ENCODE measurements at regions of chr2 and their contacts with region 1.

Region 1: GRCh38 chr2:60581433-60582282 is 28.2 kb upstream of the BCL11A start:
- DNase-seq: peak; percentile 77
- H3K4me3 ChIP-seq: peak overlapping the region; percentile 51
- H3K27ac ChIP-seq: no peak overlapping the region
- H3K4me1 ChIP-seq: no peaks in the 10 kb centered on the region
- CTCF ChIP-seq: peak; percentile 94

Region 2: DNA sequence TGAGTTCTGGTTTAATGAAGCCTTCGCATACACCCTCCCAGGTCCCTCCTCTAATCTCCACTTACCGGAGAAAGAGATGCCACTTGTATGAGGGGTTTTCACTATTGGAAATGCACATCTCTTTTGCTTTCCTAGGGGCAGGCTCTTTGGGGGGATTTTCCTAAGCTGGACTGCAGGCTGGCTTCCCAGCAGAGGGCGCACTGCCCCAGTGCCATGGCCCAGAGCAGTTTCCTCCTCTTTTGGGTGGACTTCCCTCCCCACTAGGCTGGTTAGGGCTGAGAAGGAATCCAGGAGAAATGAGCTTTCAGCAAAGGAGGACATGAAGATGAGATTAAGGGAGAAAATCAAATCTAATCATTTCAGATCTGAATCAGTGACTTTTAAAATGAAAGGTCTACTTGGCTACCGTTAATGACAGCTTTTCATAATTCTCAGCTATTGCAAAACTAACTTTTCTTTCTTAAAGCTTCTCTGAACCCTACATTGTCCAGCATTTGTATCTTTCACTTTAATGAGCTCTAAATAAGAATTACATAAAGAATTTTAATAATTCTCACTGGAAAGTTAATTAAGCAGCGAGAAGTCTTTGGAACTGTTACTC is 1556.4 kb before region 1 on chr2:
- CTCF ChIA-PET with region 1: no interaction called
- POLR2A ChIA-PET with region 1: no interaction called
- intact Hi-C with region 1: loop called (anchors 5 kb)
- DNase-seq: peak; percentile 47
- H3K4me3 ChIP-seq: no peak overlapping the region
- H3K27ac ChIP-seq: no peak overlapping the region
- H3K4me1 ChIP-seq: no peaks in the 10 kb centered on the region
- CTCF ChIP-seq: peak; percentile 92

Region 3: GRCh38 chr2:59301466-59302402 is 1279.9 kb before region 1 on chr2:
- CTCF ChIA-PET with region 1: no interaction called
- POLR2A ChIA-PET with region 1: no interaction called
- intact Hi-C with region 1: loop called (anchors 5 kb)
- DNase-seq: peak; percentile 60
- H3K4me3 ChIP-seq: no peak overlapping the region
- H3K27ac ChIP-seq: no peak overlapping the region
- H3K4me1 ChIP-seq: no peaks in the 10 kb centered on the region
- CTCF ChIP-seq: peak; percentile 75

Region 4: GRCh38 chr2:60780721-60781120 is 199.1 kb after region 1 on chr2:
- CTCF ChIA-PET with region 1: no interaction called
- POLR2A ChIA-PET with region 1: no interaction called
- intact Hi-C with region 1: no loop called
- DNase-seq: no peak
- H3K4me3 ChIP-seq: no peak overlapping the region
- H3K27ac ChIP-seq: no peak overlapping the region
- H3K4me1 ChIP-seq: no peaks in the 10 kb centered on the region
- CTCF ChIP-seq: no peak

Region 5: GRCh38 chr2:61512768-61513398 is 931.2 kb after region 1 on chr2:
- CTCF ChIA-PET with region 1: no interaction called
- POLR2A ChIA-PET with region 1: no interaction called
- intact Hi-C with region 1: no loop called
- DNase-seq: no peak
- H3K4me3 ChIP-seq: no peak overlapping the region
- H3K27ac ChIP-seq: no peak overlapping the region
- H3K4me1 ChIP-seq: no peaks in the 10 kb centered on the region
- CTCF ChIP-seq: no peak